ENCODE measurements at regions of chr5 and their contacts with region 1.

Region 1: DNA sequence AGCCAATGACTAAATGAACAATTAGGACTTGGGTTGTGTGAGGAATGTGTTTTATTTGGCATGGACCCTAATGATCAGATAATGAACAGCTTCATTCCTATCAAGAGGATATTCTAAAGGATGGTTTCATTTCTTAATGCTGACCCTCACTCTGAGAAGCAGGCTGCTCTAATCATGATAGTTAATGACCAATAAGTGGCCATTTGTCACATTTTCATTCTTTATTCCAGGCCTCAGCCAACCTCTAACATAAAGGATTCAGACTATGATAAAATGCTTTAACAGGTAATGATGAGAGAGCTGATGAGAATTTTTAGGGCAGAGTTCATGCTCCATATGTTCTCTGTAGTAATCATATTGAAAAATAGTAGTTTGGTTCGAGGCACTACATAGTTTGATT is 301.5 kb upstream of the ARRDC3 start:
- DNase-seq: no peak
- H3K4me3 Mint-ChIP-seq: no peak overlapping the region
- H3K27ac Mint-ChIP-seq: no peak overlapping the region
- H3K4me1 Mint-ChIP-seq: no peaks in the 10 kb centered on the region
- H3K27me3 Mint-ChIP-seq: peaks cover 53% of the 10 kb centered on the region
- CTCF ChIP-seq: no peak

Region 2: DNA sequence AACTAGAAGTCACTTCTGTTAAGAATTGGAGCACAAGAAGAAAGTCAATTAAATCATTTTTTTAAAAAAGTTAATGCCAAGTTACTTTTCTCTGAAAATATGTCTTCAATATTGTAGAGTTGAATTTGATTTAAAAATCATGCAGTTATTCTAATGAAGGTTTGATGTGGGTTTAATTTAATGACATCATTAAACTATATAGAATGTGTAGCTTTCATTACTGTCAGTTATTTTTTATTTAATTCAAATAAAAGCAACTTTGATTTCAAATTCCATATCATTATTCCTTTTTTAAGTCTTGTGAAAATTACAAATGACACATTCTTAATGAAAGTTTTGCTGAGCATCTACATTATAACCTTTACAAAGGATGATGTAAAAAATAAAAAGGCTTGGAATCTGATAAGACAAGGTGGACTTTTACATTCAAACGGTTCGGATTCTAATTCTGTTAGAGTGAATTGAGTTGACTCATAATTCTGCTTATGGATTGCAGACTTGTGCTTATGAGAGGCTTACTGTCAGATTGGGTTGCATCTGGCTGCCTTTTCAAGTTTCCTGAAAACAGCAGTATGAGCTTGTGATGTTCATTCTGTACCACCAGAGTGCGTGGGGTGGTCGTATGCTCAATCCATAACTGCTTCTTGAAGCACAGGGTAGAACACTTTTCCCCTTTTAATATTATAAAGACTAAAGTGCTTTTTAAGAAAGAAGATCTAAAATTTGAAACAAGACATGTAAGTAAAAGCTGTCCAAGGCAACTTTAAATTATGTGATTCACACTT is 48.5 kb before region 1 on chr5:
- CTCF ChIA-PET with region 1: no interaction called
- POLR2A ChIA-PET with region 1: no interaction called
- intact Hi-C with region 1: no loop called
- DNase-seq: no peak
- H3K4me3 Mint-ChIP-seq: no peak overlapping the region
- H3K27ac Mint-ChIP-seq: no peak overlapping the region
- H3K4me1 Mint-ChIP-seq: no peaks in the 10 kb centered on the region
- H3K27me3 Mint-ChIP-seq: peaks cover 79% of the 10 kb centered on the region
- CTCF ChIP-seq: no peak

Region 3: GRCh38 chr5:91727463-91727862 is 42.8 kb after region 1 on chr5:
- CTCF ChIA-PET with region 1: no interaction called
- POLR2A ChIA-PET with region 1: no interaction called
- intact Hi-C with region 1: loop called (anchors 5 kb)
- DNase-seq: no peak
- H3K4me3 Mint-ChIP-seq: no peak overlapping the region
- H3K27ac Mint-ChIP-seq: no peak overlapping the region
- H3K4me1 Mint-ChIP-seq: no peaks in the 10 kb centered on the region
- H3K27me3 Mint-ChIP-seq: peaks cover 12% of the 10 kb centered on the region
- CTCF ChIP-seq: no peak

Measured in MCF 10A (cell line).